Panc1 (cell line): ENCODE measurements at regions of chr1 and their contacts with region 1.

Region 1: GRCh38 chr1:209576798-209577197 is 6.7 kb upstream of the CAMK1G start:
- DNase-seq: peak; percentile 63
- ATAC-seq: peak; percentile 99
- H3K4me3 ChIP-seq: no peak overlapping the region
- H3K27ac ChIP-seq: no peak overlapping the region
- H3K4me1 ChIP-seq: no peaks in the 10 kb centered on the region
- H3K27me3 ChIP-seq: 0 out of 2 replicates have a peak, but pooled peaks cover under 1% of the 10 kb centered on the region
- CTCF ChIP-seq: peak; percentile 90

Region 2: DNA sequence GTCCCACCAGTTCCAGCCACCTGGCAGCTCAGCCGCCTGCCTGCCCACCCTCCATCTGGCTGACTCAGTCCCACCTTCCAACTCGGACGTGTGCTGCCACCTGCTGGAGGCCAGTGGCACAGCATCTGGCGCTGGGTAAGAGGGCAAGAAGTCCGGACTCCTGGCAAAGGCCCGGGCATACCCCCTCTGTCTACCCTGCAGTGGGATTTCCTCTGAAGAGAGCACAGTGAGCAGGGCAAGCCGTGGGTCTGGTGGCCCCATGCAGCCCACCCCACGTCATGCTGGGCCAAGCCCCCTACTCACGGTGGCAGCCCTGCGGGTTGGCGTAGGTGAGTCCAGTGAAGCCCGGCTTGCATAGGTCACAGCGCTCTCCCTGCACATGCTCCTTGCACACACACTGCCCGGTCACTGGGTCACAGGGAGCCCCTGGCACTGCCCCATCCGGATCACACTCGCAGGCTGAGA is 51.0 kb after region 1 on chr1:
- CTCF ChIA-PET with region 1: no interaction called
- POLR2A ChIA-PET with region 1: no interaction called
- in situ Hi-C with region 1: no loop called
- intact Hi-C with region 1: loop called (anchors 2 kb)
- DNase-seq: peak; percentile 43
- ATAC-seq: peak; percentile 89
- H3K4me3 ChIP-seq: no peak overlapping the region
- H3K27ac ChIP-seq: no peak overlapping the region
- H3K4me1 ChIP-seq: no peaks in the 10 kb centered on the region
- H3K27me3 ChIP-seq: no peaks in the 10 kb centered on the region
- CTCF ChIP-seq: peak; percentile 97